ENCODE measurements at regions of chr11 and their contacts with region 1.

Region 1: DNA sequence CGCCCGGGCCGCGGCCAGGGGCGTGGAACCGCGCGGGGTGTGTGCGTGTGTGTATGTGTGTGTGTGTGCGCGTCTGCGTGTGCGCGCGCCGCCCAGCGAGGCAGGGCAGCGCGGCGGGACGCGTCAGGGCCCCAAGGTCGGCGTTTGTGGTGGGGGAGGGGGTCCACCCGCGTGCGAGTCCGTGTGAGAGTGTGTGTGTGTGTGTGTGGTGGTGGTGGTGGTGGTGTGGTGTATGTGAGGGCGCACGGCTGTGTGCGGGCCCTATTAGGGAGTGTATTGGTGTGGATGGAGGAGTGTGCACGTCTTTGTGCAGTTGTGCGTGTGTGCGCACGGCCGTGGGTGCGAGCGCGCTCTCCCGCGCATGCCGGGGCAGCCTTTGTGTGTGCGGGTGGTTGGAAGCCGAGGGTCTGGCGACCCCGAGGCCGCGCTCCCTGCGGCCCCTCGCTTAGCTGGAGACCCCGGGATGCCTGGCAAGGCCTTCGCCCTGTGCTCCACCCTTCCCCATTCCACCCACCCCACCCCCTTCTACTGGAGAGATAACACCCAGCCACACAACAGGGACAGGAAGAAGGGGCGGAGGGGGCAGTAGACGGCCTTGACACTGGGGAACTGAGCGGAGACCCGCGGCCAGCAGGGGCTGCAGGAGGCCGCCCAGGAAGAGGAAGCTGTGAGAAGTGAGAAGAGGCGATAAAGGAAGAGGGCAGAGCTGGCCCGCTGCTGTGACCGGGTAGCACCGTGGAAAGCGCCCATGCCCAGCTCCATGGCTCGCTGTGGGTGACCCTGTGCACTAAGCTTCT is 528 bp upstream of the ARRB1 start:
- DNase-seq: peak; percentile 54
- H3K4me3 Mint-ChIP-seq: peak overlapping the region; percentile 84
- H3K27ac Mint-ChIP-seq: peak overlapping the region; percentile 75
- H3K4me1 Mint-ChIP-seq: peaks cover 55% of the 10 kb centered on the region
- H3K27me3 Mint-ChIP-seq: no peaks in the 10 kb centered on the region

Region 2: DNA sequence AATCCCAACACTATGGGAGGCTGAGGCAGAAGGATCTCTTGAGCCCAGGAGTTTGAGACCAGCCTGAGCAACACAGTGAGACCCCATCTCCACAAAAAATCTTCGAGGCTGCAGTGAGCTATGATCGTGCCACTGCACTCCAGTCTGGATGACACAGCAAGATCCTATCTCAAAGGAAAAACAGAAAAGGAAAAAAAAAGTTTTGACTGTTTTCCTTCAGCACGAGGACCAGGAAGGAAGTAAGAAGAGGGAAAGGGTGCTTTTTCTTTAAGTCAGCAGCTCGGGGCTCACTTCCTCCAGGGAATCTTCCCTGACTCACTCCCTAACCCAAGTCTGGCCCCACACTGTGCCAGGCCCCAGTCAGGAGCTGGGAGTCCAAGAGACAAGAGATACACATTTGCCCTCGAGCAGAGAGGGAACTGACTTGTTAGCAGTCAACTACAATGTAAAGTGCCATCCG is 14.8 kb before region 1 on chr11:
- CTCF ChIA-PET with region 1: interaction called, 23 read pairs
- intact Hi-C with region 1: loop called (anchors 1 kb)
- DNase-seq: no peak
- H3K4me3 Mint-ChIP-seq: no peak overlapping the region
- H3K27ac Mint-ChIP-seq: peak overlapping the region; percentile 92
- H3K4me1 Mint-ChIP-seq: peaks cover 92% of the 10 kb centered on the region
- H3K27me3 Mint-ChIP-seq: no peaks in the 10 kb centered on the region

Measured in activated naive CD4-positive, alpha-beta T cell treated with anti-CD3 and anti-CD28 coated beads for 36 hours (primary cell).